ENCODE measurements at regions of chr7 and their contacts with region 1.

Region 1: DNA sequence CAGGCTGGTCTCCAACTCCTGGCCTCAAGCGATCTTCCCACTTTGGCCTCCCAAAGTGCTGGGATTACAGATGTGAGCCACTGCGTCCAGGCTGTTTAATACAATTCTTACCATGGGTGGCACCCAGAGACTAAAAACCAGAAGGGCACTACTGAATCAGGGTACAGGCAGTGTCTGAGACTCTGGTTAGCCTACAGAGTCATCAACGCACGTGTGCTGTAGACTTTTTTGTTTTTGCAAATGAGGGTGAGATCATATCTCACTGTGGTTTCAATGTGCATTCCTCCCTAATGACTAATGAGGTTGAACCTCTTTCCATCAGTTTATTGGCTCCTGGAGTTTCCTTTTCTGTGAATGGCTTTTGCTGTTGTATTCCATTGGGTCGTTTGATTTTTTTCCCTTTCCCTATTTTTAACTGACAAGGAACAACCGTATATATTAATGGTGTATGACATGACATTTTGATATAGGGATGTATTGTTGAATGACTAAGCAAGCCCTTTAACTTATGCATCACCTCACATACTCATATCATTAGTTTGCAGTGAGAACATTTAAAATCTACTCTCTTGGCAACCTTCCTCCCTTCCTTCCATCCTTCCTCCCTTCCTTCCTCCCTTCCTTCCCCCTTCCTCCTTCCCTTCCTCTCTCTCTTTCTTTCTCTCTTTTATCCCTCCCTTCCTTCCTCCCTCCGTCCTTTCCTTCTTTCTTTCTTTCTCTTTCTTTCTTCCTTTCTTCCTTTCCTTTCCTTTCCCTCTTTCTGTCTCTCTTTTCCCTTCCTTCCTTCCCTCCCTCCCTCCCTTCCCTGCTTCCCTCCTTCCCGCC is 9.3 kb upstream of the METTL27 start:
- DNase-seq: no peak

Region 2: DNA sequence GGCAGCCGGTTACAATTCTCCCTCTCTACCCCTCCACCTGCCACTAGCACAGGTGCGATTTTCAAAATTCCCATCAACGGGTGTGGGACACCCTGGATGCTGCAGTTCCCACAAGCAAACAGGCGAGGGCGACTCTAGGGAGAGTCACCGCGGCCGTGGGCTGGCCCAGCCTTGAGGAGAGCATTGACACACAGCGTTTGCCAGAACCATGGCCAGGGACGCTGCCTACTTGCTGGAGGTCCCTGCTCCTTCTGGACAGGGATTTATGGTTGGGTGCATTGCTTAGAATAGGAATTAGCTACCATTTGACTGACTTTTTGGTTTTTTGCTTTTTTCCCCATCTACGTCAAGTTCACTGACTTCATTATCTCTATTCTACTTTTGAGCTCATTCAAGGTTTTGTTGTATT is 39.9 kb before region 1 on chr7:
- intact Hi-C with region 1: loop called (anchors 1 kb)
- DNase-seq: peak; percentile 75

Region 3: DNA sequence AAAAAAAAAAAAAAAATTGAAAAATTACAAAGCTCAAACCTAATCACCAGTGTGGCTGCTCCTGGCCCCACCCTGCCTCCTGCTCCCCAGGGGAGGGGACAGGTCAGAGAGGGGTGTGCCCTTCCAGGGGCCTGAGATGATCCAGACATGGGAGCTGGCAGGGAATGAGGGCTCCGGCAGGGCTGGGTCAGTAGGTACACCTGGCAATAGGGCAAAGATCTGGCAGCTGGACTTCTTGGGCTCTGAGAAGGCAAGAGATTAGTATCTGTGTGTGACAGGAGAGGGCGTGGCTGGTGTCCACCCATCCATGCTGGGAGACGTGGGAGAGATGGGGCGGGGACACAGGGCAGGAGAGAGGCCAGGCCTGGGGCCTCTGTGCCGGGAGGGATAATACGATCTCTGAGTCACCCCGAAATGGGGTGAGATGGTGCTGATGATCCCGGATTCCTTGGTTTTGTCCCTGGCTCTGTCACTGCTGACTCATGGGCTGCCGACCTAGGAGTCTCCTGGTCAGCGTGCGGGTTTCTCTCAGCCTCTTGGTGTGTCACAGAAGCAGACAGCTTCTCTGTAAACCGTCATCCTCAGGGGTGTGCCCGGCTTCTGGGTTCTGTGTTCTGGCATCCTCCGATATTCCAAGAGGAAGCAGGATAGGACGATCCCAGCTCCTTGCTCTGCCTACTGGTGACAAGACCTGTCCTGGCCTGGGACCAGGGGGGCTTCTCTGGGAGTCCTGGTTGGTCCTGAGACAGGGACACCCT is 29.1 kb before region 1 on chr7:
- intact Hi-C with region 1: no loop called
- DNase-seq: no peak

Region 4: GRCh38 chr7:73865738-73866445 is 14.3 kb after region 1 on chr7:
- intact Hi-C with region 1: no loop called
- DNase-seq: no peak